Heart left ventricle (tissue), 16 donors: ENCODE measurements at regions of chr10 and their contacts with region 1.

Region 1: GRCh38 chr10:43407576-43408330 is 1.2 kb downstream of the HNRNPF start:
- DNase-seq: peak; percentile 92 to 94 (median 93)
- ATAC-seq: peak; percentile 77 to 79 (median 78)
- H3K4me3 ChIP-seq: peak overlapping the region; percentile 64 to 90 (median 83)
- H3K27ac ChIP-seq: peak overlapping the region; percentile 96 to 100 (median 98)
- H3K4me1 ChIP-seq: peaks cover 13 to 57% (median 37%) of the 10 kb centered on the region in 12 donors
- H3K27me3 ChIP-seq: no peaks in the 10 kb centered on the region
- CTCF ChIP-seq: peak in 8 of 12 donors; percentile 16 to 47 (median 35)
- POLR2A ChIP-seq: no peak

Region 2: DNA sequence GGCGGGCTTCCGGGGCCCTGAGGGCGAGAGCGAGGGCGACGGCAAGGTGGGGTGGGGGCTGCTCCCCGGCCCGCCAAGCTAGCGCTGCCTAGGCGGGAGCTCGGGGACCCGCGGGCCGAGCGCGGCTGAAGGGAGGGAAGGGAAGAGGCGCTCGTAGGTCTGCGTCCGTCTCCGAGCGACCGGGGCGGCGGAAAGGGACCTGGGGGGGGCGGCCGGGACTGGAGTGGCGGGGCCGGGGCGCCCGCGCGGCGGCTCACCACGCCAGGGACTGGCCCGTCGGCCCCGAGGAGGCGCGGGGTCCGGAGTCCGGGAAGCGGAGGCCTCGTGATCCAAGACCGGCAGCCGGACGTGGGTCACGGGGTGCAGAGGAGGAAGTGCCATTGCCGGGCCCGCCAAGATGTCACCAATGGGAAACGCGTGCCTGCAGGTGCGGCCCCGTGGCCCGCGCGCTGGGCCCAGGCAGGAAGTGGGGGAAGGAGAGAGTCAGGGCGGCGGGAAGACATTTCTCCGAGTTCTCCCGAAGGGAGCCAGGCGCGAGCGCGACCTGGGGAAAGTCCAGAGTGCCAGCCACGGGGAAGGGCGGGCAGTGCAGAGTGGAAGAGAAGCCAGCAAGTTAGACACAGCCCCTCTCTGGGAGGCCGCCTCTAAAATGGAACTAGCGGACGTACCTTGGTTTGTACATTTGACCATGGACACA is 10.7 kb before region 1 on chr10:
- intact Hi-C with region 1: loop called in 1 of 10 experiments (anchors 1 kb)
- DNase-seq: peak; percentile 91 to 93 (median 92)
- ATAC-seq: peak; percentile 87 to 92 (median 92)
- H3K4me3 ChIP-seq: peak overlapping the region; percentile 12 to 90 (median 73)
- H3K27ac ChIP-seq: peak overlapping the region; percentile 90 to 99 (median 96)
- H3K4me1 ChIP-seq: peaks cover 0 to 84% (median 42%) of the 10 kb centered on the region in 12 donors
- H3K27me3 ChIP-seq: no peaks in the 10 kb centered on the region
- CTCF ChIP-seq: no peak
- POLR2A ChIP-seq: peak in 1 of 2 donors; percentile 47

Region 3: GRCh38 chr10:43420369-43421200 is 12.8 kb after region 1 on chr10:
- intact Hi-C with region 1: loop called in 1 of 10 experiments (anchors 1 kb)
- DNase-seq: peak; percentile 91 to 94 (median 93)
- ATAC-seq: peak; percentile 94 to 99 (median 96)
- H3K4me3 ChIP-seq: peak overlapping the region; percentile 22 to 86 (median 66)
- H3K27ac ChIP-seq: peak overlapping the region; percentile 95 to 100 (median 98)
- H3K4me1 ChIP-seq: peaks cover 0 to 42% (median 9%) of the 10 kb centered on the region in 12 donors
- H3K27me3 ChIP-seq: no peaks in the 10 kb centered on the region
- CTCF ChIP-seq: peak in 6 of 12 donors; percentile 8 to 57 (median 30)
- POLR2A ChIP-seq: peak in 1 of 2 donors; percentile 76

Region 4: GRCh38 chr10:43461950-43462349 is 54.2 kb after region 1 on chr10:
- intact Hi-C with region 1: no loop called
- DNase-seq: no peak
- ATAC-seq: peak in 2 of 4 donors; percentile 67 to 70
- H3K4me3 ChIP-seq: peak overlapping the region in 6 of 12 donors; percentile 9 to 43 (median 20)
- H3K27ac ChIP-seq: no peak overlapping the region
- H3K4me1 ChIP-seq: peaks cover 0 to 3% (median 0%) of the 10 kb centered on the region in 12 donors
- H3K27me3 ChIP-seq: no peaks in the 10 kb centered on the region
- CTCF ChIP-seq: peak; percentile 63 to 84 (median 76)
- POLR2A ChIP-seq: no peak

Region 5: GRCh38 chr10:44752451-44753441 is 1345.0 kb after region 1 on chr10:
- intact Hi-C with region 1: no loop called
- DNase-seq: no peak
- ATAC-seq: no peak
- H3K4me3 ChIP-seq: no peak overlapping the region
- H3K27ac ChIP-seq: no peak overlapping the region
- H3K4me1 ChIP-seq: peaks cover 0 to 5% (median 0%) of the 10 kb centered on the region in 12 donors
- H3K27me3 ChIP-seq: no peaks in the 10 kb centered on the region
- CTCF ChIP-seq: no peak
- POLR2A ChIP-seq: no peak